ENCODE measurements at regions of chr21 and their contacts with region 1.

Region 1: GRCh38 chr21:27700974-27701614 is 734.2 kb upstream of the ADAMTS5 start:
- DNase-seq: no peak
- ATAC-seq: peak; percentile 38; the same call in 1 of the 3 replicates
- H3K4me3 ChIP-seq: no peak overlapping the region
- H3K27ac ChIP-seq: no peak overlapping the region
- H3K4me1 ChIP-seq: no peaks in the 10 kb centered on the region
- H3K27me3 ChIP-seq: no peaks in the 10 kb centered on the region
- CTCF ChIP-seq: peak; percentile 23 to 48 (median 24); a peak in 4 of 6 replicates
- EP300 ChIP-seq: no peak
- POLR2A ChIP-seq: no peak
- RAD21 ChIP-seq: peak; percentile 62

Region 2: GRCh38 chr21:26850108-26850643 is 850.9 kb before region 1 on chr21:
- CTCF ChIA-PET with region 1: interaction called, 4 read pairs
- POLR2A ChIA-PET with region 1: no interaction called
- RAD21 ChIA-PET with region 1: no interaction called
- SMC1A ChIA-PET with region 1: no interaction called
- in situ Hi-C with region 1: loop called (anchors 10 kb)
- intact Hi-C with region 1: loop called (anchors 1 kb)
- DNase-seq: peak; percentile 0
- ATAC-seq: peak; percentile 40; the same call in 2 of the 3 replicates
- H3K4me3 ChIP-seq: no peak overlapping the region
- H3K27ac ChIP-seq: no peak overlapping the region
- H3K4me1 ChIP-seq: no peaks in the 10 kb centered on the region
- H3K27me3 ChIP-seq: no peaks in the 10 kb centered on the region
- CTCF ChIP-seq: peak; percentile 8 to 33 (median 11); a peak in 3 of 6 replicates
- EP300 ChIP-seq: no peak
- POLR2A ChIP-seq: no peak
- RAD21 ChIP-seq: peak; percentile 39